GM18951 (cell line): ENCODE measurements at regions of chr17 and their contacts with region 1.

Region 1: GRCh38 chr17:4412933-4413831 is 20.6 kb upstream of the SPNS3 start:
- POLR2A ChIP-seq: no peak

Region 2: DNA sequence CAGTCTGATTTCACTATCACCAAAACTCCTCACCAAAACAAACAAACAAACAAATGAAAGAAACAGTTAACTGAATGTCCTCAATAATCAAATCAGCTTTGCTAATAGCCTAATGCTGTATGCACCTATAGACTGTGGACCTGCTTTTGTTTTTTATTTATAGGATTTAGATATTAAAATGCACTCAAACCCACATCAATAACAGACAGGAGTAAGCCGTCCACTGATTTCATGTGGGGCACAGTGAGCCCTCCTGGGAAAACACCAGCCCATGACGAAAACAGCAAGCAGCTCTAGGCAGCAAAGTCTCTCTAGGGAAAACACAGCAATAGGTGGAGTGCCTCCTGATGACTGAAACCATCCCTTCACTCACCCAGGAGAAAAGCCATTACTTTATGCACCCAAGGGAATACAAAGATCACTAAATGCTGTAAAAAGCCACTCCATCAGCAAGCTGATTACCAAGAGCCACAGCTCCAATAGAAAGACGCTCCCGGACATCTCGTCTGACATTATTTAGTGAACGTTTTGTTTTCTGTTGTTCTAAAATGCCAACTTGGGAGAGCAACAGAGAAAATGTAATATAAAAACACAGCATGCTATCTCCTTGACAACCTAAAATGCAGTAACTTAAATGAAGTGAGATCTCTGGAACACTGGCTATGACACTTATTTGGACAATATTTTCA is 197.2 kb before region 1 on chr17:
- in situ Hi-C with region 1: loop called (anchors 10 kb)
- POLR2A ChIP-seq: no peak